ENCODE measurements at regions of chr16 and their contacts with region 1.

Region 1: DNA sequence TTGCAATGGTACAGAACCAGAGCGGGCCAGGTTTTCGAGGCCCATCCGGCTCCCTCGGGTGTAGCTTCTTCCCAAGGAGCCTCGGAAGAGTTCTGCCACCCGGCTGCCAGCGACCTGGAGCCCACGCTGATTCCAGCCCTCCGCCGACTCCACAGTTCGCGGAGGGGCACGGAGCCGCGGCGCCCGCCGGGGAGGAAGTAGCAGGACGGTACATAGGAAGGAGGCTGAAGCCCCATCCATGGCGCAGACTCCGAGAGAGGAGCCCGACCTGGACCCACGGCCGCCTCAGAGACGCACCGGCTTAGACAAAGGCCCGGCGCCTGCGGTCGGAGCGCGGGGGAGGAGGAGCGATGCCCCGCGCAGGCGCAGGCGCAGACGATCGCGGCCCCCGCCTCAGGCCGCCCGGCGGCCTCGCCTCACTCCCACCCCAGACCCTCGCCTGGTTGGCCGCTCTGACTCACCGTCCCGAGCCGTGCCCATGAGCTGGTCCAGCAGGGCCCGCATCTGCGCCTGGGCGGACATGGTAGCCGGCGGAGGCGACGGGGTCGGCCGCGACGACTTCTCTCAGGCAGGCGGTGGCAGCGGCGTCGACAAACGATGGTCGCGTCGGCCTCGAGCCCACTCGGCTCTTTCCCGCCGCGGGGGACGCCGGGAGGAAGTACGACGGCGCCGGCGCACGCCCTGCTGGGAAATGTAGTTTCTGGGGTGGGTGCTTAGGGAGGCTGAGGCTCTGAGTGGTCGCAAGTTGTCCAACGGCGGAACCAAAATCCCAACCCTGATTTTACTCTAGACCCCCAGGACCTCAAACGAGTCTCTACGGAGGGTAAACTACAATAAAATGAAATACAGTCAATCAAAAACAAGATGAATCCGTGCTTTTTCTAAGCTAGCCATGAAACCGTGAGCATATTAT is at the start of gene LUC7L:
- DNase-seq: peak; percentile 85 to 98 (median 90)

Region 2: GRCh38 chr16:352547-353403 is 123.7 kb after region 1 on chr16 and contains the start of gene AXIN1:
- intact Hi-C with region 1: loop called (anchors 5 kb)
- DNase-seq: peak; percentile 82 to 99 (median 90)